Activated T-helper 1 cell treated with anti-CD3 and anti-CD28 coated beads, Interleukin-12 subunit alpha, Interleukin-12 subunit beta, Interleukin-2, Interleukin-4 antibody, amounts not matched to agents 30 ng/mL and 10 ng/mL and 1 ng/mL, durations not matched to agents 14 hours and 24 hours and 36 hours (primary cell): ENCODE measurements at regions of chr19 and their contacts with region 1.

Region 1: DNA sequence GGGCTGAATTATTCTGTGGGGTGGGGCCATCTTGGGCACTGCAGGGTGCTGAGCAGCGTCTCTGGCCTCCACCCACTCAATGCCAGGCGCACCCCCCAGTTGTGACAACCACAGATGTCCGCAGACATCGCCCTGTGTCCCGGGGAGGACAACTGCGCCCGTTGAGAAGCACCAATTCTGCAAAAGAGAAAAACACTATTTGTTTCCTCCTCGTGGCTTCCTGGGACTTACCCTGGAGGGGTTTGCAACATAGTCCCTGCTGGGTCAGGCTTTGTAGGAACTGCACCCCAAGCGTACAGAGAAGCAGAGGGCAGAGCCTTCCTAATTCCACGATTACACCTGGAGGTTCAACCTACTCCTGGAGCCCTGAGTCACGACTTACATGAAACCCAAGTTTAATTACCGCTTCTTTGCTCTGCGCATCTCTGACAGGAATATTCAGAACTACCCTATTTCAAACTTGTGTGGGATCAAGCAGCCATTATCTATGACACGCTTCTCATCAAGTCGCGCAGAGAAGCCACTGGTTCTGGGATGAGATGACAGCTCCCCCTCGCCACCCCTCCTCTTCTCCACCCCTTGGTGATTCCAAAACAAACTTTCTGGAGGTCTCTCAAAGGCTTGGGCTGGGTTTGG is 11.1 kb upstream of the SLC39A3 start:
- DNase-seq: no peak
- H3K4me3 Mint-ChIP-seq: no peak overlapping the region
- H3K27ac Mint-ChIP-seq: no peak overlapping the region
- H3K4me1 Mint-ChIP-seq: no peaks in the 10 kb centered on the region
- H3K27me3 Mint-ChIP-seq: peaks cover 3% of the 10 kb centered on the region

Region 2: DNA sequence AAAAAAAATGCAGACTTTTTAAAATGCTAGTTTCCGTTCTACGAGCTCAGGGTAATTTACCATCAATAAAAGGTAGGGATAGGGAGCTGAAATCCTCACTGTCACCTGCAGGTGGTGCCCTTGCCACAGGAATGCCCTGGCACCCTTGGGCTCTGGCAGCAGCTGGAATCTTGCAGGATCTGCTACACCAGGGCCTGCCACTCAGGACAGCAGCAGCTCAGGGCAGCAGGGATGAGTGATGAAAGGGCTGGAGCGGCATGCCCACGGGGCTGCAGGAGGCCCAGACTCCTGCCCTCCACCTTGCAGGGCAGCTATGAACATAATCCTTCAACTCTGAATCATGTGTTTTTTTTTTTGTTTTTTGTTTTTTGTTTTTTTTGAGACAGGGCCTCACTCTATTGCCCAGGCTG is 102.4 kb before region 1 on chr19:
- intact Hi-C with region 1: loop called (anchors 1 kb)
- DNase-seq: peak; percentile 59
- H3K4me3 Mint-ChIP-seq: no peak overlapping the region
- H3K27ac Mint-ChIP-seq: no peak overlapping the region
- H3K4me1 Mint-ChIP-seq: no peaks in the 10 kb centered on the region
- H3K27me3 Mint-ChIP-seq: no peaks in the 10 kb centered on the region

Region 3: DNA sequence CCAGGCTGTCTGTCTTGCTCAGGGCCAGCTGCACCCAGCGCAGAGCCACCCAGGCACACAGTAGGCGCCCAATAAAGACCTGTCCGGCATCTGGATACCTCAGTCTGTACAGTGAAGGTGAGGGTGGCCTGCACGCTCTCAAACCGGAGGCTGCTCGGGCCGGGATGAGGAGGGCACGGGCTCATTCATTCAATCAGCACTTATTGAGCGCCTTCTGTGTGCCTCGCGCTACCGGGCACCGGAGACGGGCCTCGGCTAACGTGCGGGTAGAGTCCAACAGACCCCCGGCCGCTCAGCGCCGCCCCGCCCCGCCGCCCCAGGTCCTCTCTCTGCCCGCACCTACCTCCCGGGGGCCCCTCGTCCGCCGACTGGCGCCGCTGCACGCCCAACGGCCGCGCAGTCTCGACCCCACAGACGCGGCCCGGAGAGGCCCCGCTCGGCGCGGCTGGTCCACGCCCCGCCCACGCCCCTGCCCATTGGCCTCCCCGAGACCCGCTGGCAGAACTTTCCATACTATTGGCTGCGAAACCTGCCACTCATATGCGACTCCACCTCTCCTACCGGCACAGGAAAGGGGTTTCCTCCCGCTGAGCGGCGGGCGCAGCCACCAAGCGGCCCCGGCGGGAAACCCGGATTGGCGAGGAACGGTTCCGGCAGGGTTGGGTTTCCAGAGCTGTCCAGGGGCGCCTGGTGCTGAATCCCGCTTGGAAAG is 11.2 kb before region 1 on chr19 and contains the start of gene SLC39A3:
- intact Hi-C with region 1: loop called (anchors 1 kb)
- DNase-seq: peak; percentile 98
- H3K4me3 Mint-ChIP-seq: peak within 1 kb of the TSS; percentile 93
- H3K27ac Mint-ChIP-seq: peak within 1 kb of the TSS; percentile 87
- H3K4me1 Mint-ChIP-seq: peaks cover 9% of the 10 kb centered on the region
- H3K27me3 Mint-ChIP-seq: peaks cover 5% of the 10 kb centered on the region
- total RNA-seq, gene SLC39A3: 50.3 and 51.6 TPM in 2 replicates